Activated CD4-positive, alpha-beta memory T cell treated with anti-CD3 and anti-CD28 coated beads for 36 hours (primary cell): ENCODE measurements at regions of chr1 and their contacts with region 1.

Region 1: GRCh38 chr1:154955718-154956543 is at the start of gene PBXIP1:
- DNase-seq: peak; percentile 89
- H3K4me3 Mint-ChIP-seq: peak within 1 kb of the TSS; percentile 92
- H3K27ac Mint-ChIP-seq: peak within 1 kb of the TSS; percentile 97
- H3K4me1 Mint-ChIP-seq: peaks cover 75% of the 10 kb centered on the region
- H3K27me3 Mint-ChIP-seq: no peaks in the 10 kb centered on the region
- total RNA-seq, gene PBXIP1: 55.9 to 57.3 TPM

Region 2: GRCh38 chr1:154943649-154944400 is 12.1 kb before region 1 on chr1:
- CTCF ChIA-PET with region 1: interaction called, 16 read pairs
- POLR2A ChIA-PET with region 1: interaction called, 13 read pairs
- intact Hi-C with region 1: no loop called
- DNase-seq: peak; percentile 61
- H3K4me3 Mint-ChIP-seq: peak overlapping the region; percentile 52
- H3K27ac Mint-ChIP-seq: peak overlapping the region; percentile 93
- H3K4me1 Mint-ChIP-seq: peaks cover 54% of the 10 kb centered on the region
- H3K27me3 Mint-ChIP-seq: no peaks in the 10 kb centered on the region

Region 3: GRCh38 chr1:154974063-154974807 is 18.3 kb after region 1 on chr1 and contains the start of gene CKS1B:
- CTCF ChIA-PET with region 1: interaction called, 35 read pairs
- POLR2A ChIA-PET with region 1: interaction called, 15 read pairs
- intact Hi-C with region 1: loop called (anchors 1 kb)
- DNase-seq: peak; percentile 98
- H3K4me3 Mint-ChIP-seq: no peak within 1 kb of the TSS
- H3K27ac Mint-ChIP-seq: no peak within 1 kb of the TSS
- H3K4me1 Mint-ChIP-seq: peaks cover 30% of the 10 kb centered on the region
- H3K27me3 Mint-ChIP-seq: no peaks in the 10 kb centered on the region
- total RNA-seq, gene CKS1B: 197 to 205 TPM

Region 4: GRCh38 chr1:154982897-154983648 is 27.1 kb after region 1 on chr1 and contains the start of gene FLAD1:
- CTCF ChIA-PET with region 1: interaction called, 13 read pairs
- POLR2A ChIA-PET with region 1: interaction called, 7 read pairs
- intact Hi-C with region 1: no loop called
- DNase-seq: peak; percentile 98
- H3K4me3 Mint-ChIP-seq: no peak within 1 kb of the TSS
- H3K27ac Mint-ChIP-seq: no peak within 1 kb of the TSS
- H3K4me1 Mint-ChIP-seq: peaks cover 14% of the 10 kb centered on the region
- H3K27me3 Mint-ChIP-seq: no peaks in the 10 kb centered on the region
- total RNA-seq, gene FLAD1: 45.4 to 49.4 TPM

Region 5: GRCh38 chr1:155063550-155064110 is 107.7 kb after region 1 on chr1 and contains the start of gene EFNA4:
- CTCF ChIA-PET with region 1: interaction called, 6 read pairs
- POLR2A ChIA-PET with region 1: no interaction called
- intact Hi-C with region 1: loop called (anchors 1 kb)
- DNase-seq: peak; percentile 89
- H3K4me3 Mint-ChIP-seq: peak within 1 kb of the TSS; percentile 80
- H3K27ac Mint-ChIP-seq: peak within 1 kb of the TSS; percentile 31
- H3K4me1 Mint-ChIP-seq: peaks cover 29% of the 10 kb centered on the region
- H3K27me3 Mint-ChIP-seq: no peaks in the 10 kb centered on the region
- total RNA-seq, gene EFNA4: 5.0 to 6.1 TPM

Region 6: DNA sequence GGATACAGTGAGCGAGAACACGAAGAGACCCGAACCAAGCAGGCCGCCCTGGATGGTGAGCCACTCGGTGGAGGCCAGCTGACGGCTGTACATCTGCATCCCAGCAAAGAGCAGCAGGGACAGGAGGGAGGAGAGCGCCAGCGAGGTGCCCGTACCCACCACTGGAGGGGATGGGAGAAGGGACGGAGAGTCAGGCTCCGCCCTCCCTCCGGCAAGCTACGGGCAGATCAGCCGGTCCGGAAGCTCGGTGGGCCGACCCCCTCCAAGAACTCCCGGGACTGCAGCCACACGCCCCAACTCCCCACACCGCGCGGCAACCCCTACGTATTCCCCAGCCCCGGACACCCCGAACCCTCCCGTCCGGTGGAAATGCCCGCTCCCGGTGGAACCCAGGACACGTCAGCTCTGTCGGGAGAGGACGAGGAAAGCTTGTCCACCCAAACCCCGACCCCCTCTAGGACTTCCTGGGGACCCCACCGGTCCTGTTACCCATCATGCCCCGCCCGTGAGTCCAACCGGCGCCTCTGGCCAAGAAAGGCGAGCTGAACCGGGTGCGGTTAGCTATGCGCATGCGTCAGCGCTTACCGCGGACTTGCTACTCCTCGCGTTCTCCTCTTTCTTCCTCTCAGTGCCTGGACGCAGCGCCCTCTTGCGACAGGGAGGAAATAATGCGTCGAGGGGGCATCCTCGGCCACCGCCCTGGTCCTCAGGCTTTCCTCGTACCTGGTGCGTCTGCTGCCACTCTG is 217.0 kb after region 1 on chr1 and contains the start of gene KRTCAP2:
- CTCF ChIA-PET with region 1: no interaction called
- POLR2A ChIA-PET with region 1: no interaction called
- intact Hi-C with region 1: no loop called
- DNase-seq: peak; percentile 98
- H3K4me3 Mint-ChIP-seq: peak within 1 kb of the TSS; percentile 93
- H3K27ac Mint-ChIP-seq: peak within 1 kb of the TSS; percentile 96
- H3K4me1 Mint-ChIP-seq: peaks cover 48% of the 10 kb centered on the region
- H3K27me3 Mint-ChIP-seq: no peaks in the 10 kb centered on the region
- total RNA-seq, gene KRTCAP2: 138 to 146 TPM

Region 7: DNA sequence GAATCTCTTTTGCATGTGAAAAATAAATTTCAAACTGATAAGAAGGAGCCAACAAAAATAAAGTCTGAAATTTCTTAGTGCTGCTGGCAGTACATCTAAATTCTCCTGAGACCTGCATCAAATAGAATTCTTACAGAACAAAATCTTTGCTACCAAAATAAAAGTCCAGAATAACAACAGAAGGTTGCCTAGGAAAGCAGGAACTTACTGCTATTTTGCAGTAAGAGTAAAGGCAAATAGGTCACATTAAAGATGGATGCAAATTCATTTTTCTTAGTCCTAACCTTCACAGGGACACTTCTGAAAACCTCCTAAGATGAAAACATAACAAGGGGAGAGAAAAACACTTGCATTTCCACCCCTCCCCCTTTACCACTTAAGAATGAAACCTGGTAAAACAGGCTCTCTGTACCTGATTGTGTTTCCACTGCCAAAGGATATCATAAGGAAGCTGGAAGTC is 423.7 kb after region 1 on chr1:
- CTCF ChIA-PET with region 1: no interaction called
- POLR2A ChIA-PET with region 1: no interaction called
- intact Hi-C with region 1: no loop called
- DNase-seq: no peak
- H3K4me3 Mint-ChIP-seq: no peak overlapping the region
- H3K27ac Mint-ChIP-seq: no peak overlapping the region
- H3K4me1 Mint-ChIP-seq: no peaks in the 10 kb centered on the region
- H3K27me3 Mint-ChIP-seq: no peaks in the 10 kb centered on the region